ENCODE measurements at regions of chr7 and their contacts with region 1.

Region 1: GRCh38 chr7:151057989-151058780 is 488 bp upstream of the CDK5 start:
- DNase-seq: peak; percentile 91 to 99 (median 98)
- ATAC-seq: peak; percentile 91
- H3K4me3 Mint-ChIP-seq: peak overlapping the region; percentile 88 to 97 (median 94)
- H3K27ac Mint-ChIP-seq: peak overlapping the region; percentile 85 to 98 (median 96)
- H3K4me1 Mint-ChIP-seq: peaks cover 18 to 51% (median 44%) of the 10 kb centered on the region in 4 donors
- H3K27me3 Mint-ChIP-seq: peaks cover 0 to 1% (median 0%) of the 10 kb centered on the region in 5 donors

Region 2: GRCh38 chr7:151039850-151040548 is 18.2 kb before region 1 on chr7:
- POLR2A ChIA-PET with region 1: no interaction called
- DNase-seq: no peak
- ATAC-seq: peak in 1 of 2 donors; percentile 22
- H3K4me3 Mint-ChIP-seq: no peak overlapping the region
- H3K27ac Mint-ChIP-seq: peak overlapping the region in 2 of 10 donors; percentile 48 to 58
- H3K4me1 Mint-ChIP-seq: peaks cover 0 to 10% (median 9%) of the 10 kb centered on the region in 4 donors
- H3K27me3 Mint-ChIP-seq: no peaks in the 10 kb centered on the region

Region 3: DNA sequence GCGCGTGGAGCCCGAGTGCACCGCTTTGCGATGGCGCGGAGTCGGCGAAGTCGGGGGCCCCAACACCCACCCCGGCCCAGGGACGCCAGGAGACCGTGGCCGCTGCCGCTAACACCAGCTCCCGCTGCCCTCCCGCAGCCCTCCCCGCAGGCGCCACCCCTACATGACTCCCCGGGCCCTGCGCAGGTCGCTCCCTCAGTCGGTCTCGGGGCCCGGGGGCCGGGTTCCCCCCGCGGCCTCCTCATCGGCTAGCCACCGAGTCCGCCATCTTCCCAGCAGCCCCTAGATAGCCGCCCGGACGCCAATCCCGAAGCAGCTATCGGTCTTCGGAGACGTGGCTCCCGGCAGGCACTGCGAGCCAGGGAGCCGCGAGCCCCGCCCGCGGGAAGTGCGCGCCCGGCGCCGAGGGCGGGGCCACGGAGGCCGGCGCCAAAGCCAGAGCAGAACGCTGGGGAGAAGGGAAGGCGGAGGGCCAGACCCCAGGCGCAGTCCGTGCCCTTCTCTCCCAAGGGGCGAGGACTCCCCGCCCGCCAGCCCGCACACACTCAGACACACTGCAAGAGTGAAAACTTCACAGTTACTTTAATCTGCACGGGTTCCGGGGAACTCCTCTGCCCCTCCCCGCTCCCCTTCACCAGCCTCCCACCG is 22.5 kb after region 1 on chr7 and contains the start of gene FASTK:
- POLR2A ChIA-PET with region 1: interaction called, 42 read pairs
- DNase-seq: peak; percentile 82 to 93 (median 86)
- ATAC-seq: peak; percentile 72 to 80
- H3K4me3 Mint-ChIP-seq: peak within 1 kb of the TSS; percentile 81 to 93 (median 88)
- H3K27ac Mint-ChIP-seq: peak within 1 kb of the TSS; percentile 46 to 95 (median 90)
- H3K4me1 Mint-ChIP-seq: peaks cover 20 to 55% (median 44%) of the 10 kb centered on the region in 4 donors
- H3K27me3 Mint-ChIP-seq: peaks cover 0 to 13% (median 7%) of the 10 kb centered on the region in 5 donors
- polyA plus RNA-seq, gene FASTK: 38.8 to 63.6 (median 44.2) TPM

Region 4: GRCh38 chr7:151085691-151086620 is 27.8 kb after region 1 on chr7 and contains the start of gene AGAP3:
- POLR2A ChIA-PET with region 1: interaction called, 42 read pairs
- DNase-seq: peak in 9 of 10 donors; percentile 24 to 70 (median 45)
- ATAC-seq: peak in 1 of 2 donors; percentile 11
- H3K4me3 Mint-ChIP-seq: peak within 1 kb of the TSS; percentile 81 to 94 (median 90)
- H3K27ac Mint-ChIP-seq: peak within 1 kb of the TSS; percentile 64 to 95 (median 88)
- H3K4me1 Mint-ChIP-seq: peaks cover 26 to 50% (median 46%) of the 10 kb centered on the region in 4 donors
- H3K27me3 Mint-ChIP-seq: peaks cover 0 to 36% (median 10%) of the 10 kb centered on the region in 5 donors
- polyA plus RNA-seq, gene AGAP3: 1.1 to 6.0 (median 3.7) TPM